AG04449 (cell line): ENCODE measurements at regions of chr1 and their contacts with region 1.

Region 1: DNA sequence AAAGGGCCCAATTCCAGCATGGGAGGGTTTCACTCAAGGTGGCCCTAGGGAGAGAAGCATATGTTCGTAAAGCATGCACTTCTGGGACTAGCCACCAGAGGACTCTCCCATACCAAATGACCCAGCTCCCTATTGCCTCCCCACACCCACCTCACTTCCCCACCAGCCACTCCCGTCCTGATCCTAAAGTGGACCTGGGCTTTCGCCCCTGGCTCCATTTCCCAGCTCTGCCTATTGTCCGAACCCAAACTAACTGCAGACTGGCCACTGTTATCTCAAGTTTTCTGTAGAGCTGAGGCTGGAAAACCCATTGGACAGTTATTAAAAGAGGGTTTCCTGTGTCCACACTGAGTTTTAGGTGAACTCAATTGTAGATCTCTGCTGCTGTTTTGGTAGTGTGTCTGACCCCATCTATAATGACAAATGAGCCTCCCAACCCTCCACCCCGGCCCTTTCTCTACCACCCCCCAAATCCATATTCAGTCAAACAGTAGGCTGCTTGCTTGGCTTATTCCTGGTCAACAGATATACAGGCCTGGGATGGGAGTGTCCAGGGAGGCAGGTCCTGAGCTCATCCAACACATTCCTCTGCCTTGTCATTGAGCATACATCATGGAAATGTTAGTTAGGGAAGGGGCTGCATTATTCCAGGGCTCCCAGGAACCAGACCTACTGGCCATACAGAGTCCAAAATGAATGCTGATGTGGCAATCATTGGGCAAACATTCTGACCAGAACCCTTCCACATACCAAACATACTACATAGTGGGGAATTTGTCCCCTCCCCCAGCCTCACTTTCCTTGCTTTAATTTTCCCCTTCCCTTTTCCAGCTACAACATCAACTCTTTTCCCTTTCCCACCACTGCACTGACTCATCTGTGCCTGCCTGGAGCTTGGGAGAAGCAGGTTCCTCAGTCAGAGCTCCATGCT is 59.2 kb downstream of the ABCA4 start:
- DNase-seq: no peak
- H3K4me3 ChIP-seq: no peak overlapping the region
- CTCF ChIP-seq: peak; percentile 88

Region 2: GRCh38 chr1:93958726-93959100 is 103.1 kb before region 1 on chr1:
- CTCF ChIA-PET with region 1: no interaction called
- POLR2A ChIA-PET with region 1: no interaction called
- DNase-seq: no peak
- H3K4me3 ChIP-seq: no peak overlapping the region
- CTCF ChIP-seq: no peak

Region 3: DNA sequence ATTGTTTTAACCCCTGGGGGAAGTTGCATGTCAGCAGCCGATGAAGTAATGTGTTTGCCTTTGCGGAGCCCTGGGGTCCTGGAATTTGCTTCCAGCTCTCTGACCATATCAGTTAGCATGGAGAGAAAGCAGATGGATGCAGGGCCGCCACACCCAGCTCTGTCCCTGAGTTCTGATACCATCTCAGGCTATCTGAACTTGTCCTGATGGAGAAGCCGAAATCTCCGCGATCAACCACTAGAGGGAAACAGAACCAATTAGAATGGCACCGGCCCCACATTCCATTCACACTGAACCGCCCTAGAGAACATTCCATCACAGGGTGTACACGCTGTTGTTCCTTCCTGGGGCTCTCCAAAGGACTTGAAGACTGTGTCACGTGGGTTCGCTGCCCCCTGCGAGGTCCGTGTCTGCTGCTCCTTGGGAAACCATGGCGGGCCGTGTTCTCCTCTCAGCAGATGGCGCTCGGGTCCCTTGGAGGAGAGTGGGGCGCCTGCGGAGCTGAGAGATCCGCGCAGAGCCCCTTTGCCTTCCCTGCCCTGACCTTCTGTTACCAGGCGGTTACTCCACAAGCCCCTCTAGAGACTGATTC is 16.2 kb before region 1 on chr1:
- CTCF ChIA-PET with region 1: interaction called, 362 read pairs
- POLR2A ChIA-PET with region 1: no interaction called
- DNase-seq: peak; percentile 93
- H3K4me3 ChIP-seq: no peak overlapping the region; the same call in 1 of the 2 replicates
- CTCF ChIP-seq: peak; percentile 63

Region 4: GRCh38 chr1:94101541-94102525 is 40.1 kb after region 1 on chr1:
- CTCF ChIA-PET with region 1: interaction called, 10 read pairs
- POLR2A ChIA-PET with region 1: no interaction called
- DNase-seq: no peak
- H3K4me3 ChIP-seq: no peak overlapping the region
- CTCF ChIP-seq: no peak

Region 5: GRCh38 chr1:94160811-94161210 is 99.0 kb after region 1 on chr1:
- CTCF ChIA-PET with region 1: no interaction called
- POLR2A ChIA-PET with region 1: no interaction called
- DNase-seq: peak; percentile 64
- H3K4me3 ChIP-seq: no peak overlapping the region
- CTCF ChIP-seq: no peak

Region 6: DNA sequence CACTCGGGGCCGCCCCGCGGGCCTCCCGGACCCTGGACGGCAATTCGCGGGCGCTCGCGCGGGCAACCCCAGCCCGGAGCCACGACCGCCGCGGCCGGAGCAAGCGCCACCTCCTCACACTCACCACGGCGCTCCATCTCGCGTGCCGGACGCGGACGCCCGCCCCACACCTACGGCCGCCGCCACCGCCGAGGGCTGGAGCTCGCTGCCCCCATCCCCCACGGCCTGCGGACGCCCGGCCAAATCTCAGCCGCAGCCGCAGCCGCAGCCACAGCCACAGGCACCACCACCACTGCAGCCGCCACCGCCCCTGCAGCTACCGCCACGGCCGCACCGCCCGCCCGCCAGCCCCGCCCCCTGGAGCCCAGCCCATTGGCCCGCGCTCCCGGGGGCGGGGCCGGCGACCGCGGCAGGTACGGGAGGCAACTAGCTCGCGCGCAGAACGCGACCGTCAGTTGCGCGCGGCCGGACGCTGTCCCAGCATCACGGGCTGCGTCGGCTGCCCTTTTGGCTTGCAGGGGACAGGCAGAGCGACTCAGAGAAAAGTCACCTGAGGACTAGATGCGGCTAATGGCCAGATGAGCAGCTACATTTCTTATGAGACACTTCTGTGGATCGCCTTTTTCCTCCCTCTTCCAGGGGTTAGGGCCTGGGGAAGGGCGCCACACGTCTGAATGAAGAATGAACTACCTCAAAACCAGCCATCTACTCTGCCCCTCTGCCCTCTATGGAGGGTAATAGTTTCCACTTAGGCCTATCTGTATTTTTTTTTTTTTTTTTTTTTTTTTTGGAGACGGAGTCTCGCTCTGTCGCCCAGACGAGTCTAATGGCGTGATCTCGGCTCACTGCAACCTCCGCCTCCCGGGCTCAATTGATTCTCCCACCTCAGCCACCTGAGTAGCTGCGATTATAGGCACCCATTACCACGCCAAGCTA is 175.8 kb after region 1 on chr1 and contains the start of gene ARHGAP29:
- CTCF ChIA-PET with region 1: interaction called, 24 read pairs
- POLR2A ChIA-PET with region 1: no interaction called
- DNase-seq: no peak
- H3K4me3 ChIP-seq: peak within 1 kb of the TSS; percentile 83
- CTCF ChIP-seq: no peak

Region 7: DNA sequence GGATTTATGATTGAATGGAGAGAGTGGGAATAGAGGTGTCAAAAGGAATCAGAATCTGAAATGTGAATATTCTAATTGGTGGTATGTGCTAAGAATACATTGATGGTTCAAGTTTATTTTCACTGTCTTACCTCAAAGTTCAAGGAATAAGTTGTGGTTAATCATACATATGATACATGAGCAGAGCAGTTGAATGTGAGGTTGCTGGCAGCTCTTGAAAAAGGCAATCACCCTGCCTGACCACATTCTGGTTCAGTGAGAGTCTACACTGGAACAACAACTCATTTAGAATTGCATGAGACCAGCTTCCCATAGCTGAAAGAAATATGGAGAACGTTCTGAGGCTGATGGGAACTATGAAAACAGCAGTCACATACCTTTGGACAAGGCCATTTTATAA is 243.9 kb after region 1 on chr1:
- CTCF ChIA-PET with region 1: no interaction called
- POLR2A ChIA-PET with region 1: no interaction called
- DNase-seq: peak; percentile 44
- H3K4me3 ChIP-seq: no peak overlapping the region
- CTCF ChIP-seq: no peak

Region 8: GRCh38 chr1:94325379-94326302 is 263.9 kb after region 1 on chr1:
- CTCF ChIA-PET with region 1: interaction called, 726 read pairs
- POLR2A ChIA-PET with region 1: no interaction called
- DNase-seq: peak; percentile 99
- H3K4me3 ChIP-seq: no peak overlapping the region
- CTCF ChIP-seq: no peak